ENCODE measurements at regions of chr18 and their contacts with region 1.

Region 1: DNA sequence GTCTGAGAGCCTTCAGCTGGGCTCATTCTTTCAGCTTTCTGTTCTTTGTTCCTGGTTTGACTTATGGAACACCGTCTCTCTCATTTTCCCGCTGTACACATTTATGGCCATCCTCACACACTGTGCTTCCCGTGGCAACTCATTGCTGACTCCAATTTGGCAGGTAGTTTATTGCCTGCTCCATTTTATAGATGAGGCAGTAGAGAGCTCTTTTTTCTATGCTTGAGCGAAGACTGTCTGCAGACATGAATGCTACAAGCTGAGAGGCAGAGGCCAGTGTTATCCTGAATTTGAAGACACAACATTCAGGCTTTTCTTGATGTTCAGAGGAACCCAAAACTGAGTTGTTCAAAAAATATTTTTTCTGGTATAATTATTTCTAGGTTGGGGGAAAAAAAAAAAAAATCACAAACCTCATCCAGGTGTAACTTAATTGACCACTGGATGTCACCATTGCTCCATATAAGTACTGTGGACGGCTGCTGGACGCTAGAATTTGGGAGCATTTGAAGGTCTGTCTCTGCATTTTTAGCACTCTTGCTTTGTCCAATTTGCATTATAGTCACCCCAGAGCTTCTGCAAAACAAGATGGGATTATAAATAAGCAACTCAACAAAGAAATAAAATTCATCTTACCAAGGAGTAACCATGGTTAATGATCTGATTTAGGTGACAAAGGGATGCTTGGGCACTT is 83.5 kb downstream of the HRH4 start:
- DNase-seq: peak; percentile 38
- H3K4me3 ChIP-seq: no peak overlapping the region
- H3K27ac ChIP-seq: no peak overlapping the region
- H3K4me1 ChIP-seq: peaks cover 4% of the 10 kb centered on the region
- H3K27me3 ChIP-seq: no peaks in the 10 kb centered on the region
- CTCF ChIP-seq: peak; percentile 51 to 56

Region 2: GRCh38 chr18:24362758-24363157 is 181.2 kb before region 1 on chr18:
- CTCF ChIA-PET with region 1: interaction called, 15 read pairs
- dilution Hi-C with region 1: no loop called
- in situ Hi-C with region 1: no loop called
- intact Hi-C with region 1: no loop called
- DNase-seq: peak; percentile 45
- H3K4me3 ChIP-seq: no peak overlapping the region
- H3K27ac ChIP-seq: no peak overlapping the region
- H3K4me1 ChIP-seq: peaks cover 6% of the 10 kb centered on the region
- H3K27me3 ChIP-seq: no peaks in the 10 kb centered on the region
- CTCF ChIP-seq: no peak

Region 3: GRCh38 chr18:24479371-24479770 is 64.6 kb before region 1 on chr18:
- CTCF ChIA-PET with region 1: no interaction called
- dilution Hi-C with region 1: no loop called
- in situ Hi-C with region 1: no loop called
- intact Hi-C with region 1: no loop called
- DNase-seq: no peak
- H3K4me3 ChIP-seq: no peak overlapping the region
- H3K27ac ChIP-seq: no peak overlapping the region
- H3K4me1 ChIP-seq: no peaks in the 10 kb centered on the region
- H3K27me3 ChIP-seq: no peaks in the 10 kb centered on the region
- CTCF ChIP-seq: no peak

Region 4: DNA sequence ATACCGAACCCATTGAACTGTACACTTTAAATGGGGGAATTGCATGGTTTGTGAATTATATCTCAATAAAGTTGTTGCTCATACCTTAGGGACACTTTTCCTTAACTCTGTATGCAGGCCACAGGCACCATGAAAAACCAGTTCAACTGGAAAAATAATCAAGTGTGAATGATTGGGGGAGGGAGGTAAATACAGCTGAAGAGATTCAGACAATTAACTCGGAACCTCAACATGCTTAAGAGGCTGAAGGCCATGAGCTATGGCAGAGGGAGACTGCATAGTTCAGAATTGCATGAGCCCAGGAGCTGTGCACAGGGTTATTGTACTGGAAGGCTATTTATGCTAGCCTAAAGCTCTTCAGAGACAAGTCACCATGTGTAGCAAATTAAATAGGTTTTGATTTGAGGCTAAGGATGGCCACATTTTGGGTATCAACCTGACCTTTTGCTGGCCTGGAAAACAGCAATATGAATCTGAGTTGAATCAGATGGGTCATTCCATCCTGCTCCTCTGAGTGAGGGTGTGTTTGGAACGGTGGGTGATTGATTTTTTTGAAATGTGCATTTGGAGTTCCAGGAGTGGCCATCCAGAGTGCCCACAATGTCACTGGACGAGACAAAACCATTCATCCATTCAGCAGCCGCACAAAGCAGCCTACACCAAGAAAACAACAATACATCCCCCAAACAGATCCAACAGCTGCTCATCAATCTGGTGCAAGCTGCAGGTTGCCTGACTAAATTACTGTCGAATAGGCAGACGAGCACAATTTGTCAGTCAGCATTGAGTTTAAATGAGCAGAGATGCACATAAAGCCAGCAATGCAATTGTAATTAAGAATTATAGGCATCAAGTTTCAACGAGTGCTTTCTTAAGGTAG is 41.1 kb before region 1 on chr18:
- CTCF ChIA-PET with region 1: no interaction called
- dilution Hi-C with region 1: no loop called
- in situ Hi-C with region 1: no loop called
- intact Hi-C with region 1: no loop called
- DNase-seq: no peak
- H3K4me3 ChIP-seq: no peak overlapping the region
- H3K27ac ChIP-seq: no peak overlapping the region
- H3K4me1 ChIP-seq: no peaks in the 10 kb centered on the region
- H3K27me3 ChIP-seq: no peaks in the 10 kb centered on the region
- CTCF ChIP-seq: no peak

Region 5: GRCh38 chr18:24600076-24600654 is 56.2 kb after region 1 on chr18:
- CTCF ChIA-PET with region 1: interaction called, 5 read pairs
- dilution Hi-C with region 1: no loop called
- in situ Hi-C with region 1: no loop called
- intact Hi-C with region 1: loop called (anchors 1 kb)
- DNase-seq: peak; percentile 45
- H3K4me3 ChIP-seq: no peak overlapping the region
- H3K27ac ChIP-seq: no peak overlapping the region
- H3K4me1 ChIP-seq: peaks cover 8% of the 10 kb centered on the region
- H3K27me3 ChIP-seq: no peaks in the 10 kb centered on the region
- CTCF ChIP-seq: peak; percentile 55 to 61

Region 6: GRCh38 chr18:24704946-24705630 is 161.1 kb after region 1 on chr18:
- CTCF ChIA-PET with region 1: no interaction called
- dilution Hi-C with region 1: no loop called
- in situ Hi-C with region 1: no loop called
- intact Hi-C with region 1: no loop called
- DNase-seq: no peak
- H3K4me3 ChIP-seq: no peak overlapping the region
- H3K27ac ChIP-seq: no peak overlapping the region
- H3K4me1 ChIP-seq: no peaks in the 10 kb centered on the region
- H3K27me3 ChIP-seq: peaks cover 5% of the 10 kb centered on the region
- CTCF ChIP-seq: no peak

Region 7: DNA sequence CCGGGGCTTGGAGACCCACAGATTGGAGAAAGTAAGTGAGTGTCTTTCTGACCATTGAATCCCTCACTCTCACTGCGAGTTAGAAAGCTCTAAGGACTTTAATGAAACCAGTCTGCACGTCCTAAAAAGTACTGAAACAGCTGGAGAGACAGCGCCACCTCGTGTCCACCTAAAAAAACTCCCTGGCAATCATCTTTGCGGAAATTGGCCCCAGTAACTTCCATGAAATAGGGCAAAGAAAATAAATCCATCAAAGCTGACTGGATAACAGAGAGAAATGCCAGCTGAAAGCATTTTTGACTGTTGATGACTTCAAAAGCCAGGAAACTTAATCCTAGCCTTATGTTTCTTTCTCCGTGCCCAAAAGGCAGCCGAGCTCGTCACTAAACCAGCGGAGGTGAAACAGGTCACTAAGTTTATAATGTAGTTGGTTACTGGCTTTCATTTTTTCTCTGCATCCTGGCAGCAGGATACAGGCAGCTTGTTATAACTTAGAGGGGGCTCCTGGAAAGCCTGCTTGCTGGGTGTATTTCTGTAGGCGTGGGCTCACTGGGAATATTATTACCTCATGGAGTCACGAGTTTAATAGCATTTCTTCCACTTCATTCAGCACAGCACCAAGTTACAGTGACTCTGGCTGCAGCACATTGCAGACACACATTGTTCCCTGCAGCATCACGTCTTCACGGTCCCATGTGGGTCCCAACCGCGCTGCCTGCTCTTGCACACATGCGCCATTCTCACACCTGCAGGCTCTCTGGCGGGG is 183.0 kb after region 1 on chr18:
- CTCF ChIA-PET with region 1: interaction called, 9 read pairs
- dilution Hi-C with region 1: no loop called
- in situ Hi-C with region 1: loop called (anchors 5 to 10 kb)
- intact Hi-C with region 1: loop called (anchors 1 kb)
- DNase-seq: peak; percentile 61
- H3K4me3 ChIP-seq: no peak overlapping the region
- H3K27ac ChIP-seq: no peak overlapping the region
- H3K4me1 ChIP-seq: peaks cover 17% of the 10 kb centered on the region
- H3K27me3 ChIP-seq: peaks cover 2% of the 10 kb centered on the region
- CTCF ChIP-seq: peak; percentile 74 to 85

Region 8: GRCh38 chr18:24846138-24846537 is 302.2 kb after region 1 on chr18:
- CTCF ChIA-PET with region 1: no interaction called
- dilution Hi-C with region 1: no loop called
- in situ Hi-C with region 1: no loop called
- intact Hi-C with region 1: no loop called
- DNase-seq: no peak
- H3K4me3 ChIP-seq: no peak overlapping the region
- H3K27ac ChIP-seq: no peak overlapping the region
- H3K4me1 ChIP-seq: no peaks in the 10 kb centered on the region
- H3K27me3 ChIP-seq: no peaks in the 10 kb centered on the region
- CTCF ChIP-seq: no peak

Region 9: GRCh38 chr18:24878289-24878688 is 334.3 kb after region 1 on chr18:
- CTCF ChIA-PET with region 1: no interaction called
- dilution Hi-C with region 1: no loop called
- in situ Hi-C with region 1: no loop called
- intact Hi-C with region 1: loop called (anchors 10 kb)
- DNase-seq: peak; percentile 8
- H3K4me3 ChIP-seq: no peak overlapping the region
- H3K27ac ChIP-seq: no peak overlapping the region
- H3K4me1 ChIP-seq: no peaks in the 10 kb centered on the region
- H3K27me3 ChIP-seq: no peaks in the 10 kb centered on the region
- CTCF ChIP-seq: peak; percentile 42 to 55

Region 10: GRCh38 chr18:25896178-25896780 is 1352.3 kb after region 1 on chr18:
- CTCF ChIA-PET with region 1: no interaction called
- dilution Hi-C with region 1: no loop called
- in situ Hi-C with region 1: loop called in 1 of 2 experiments (anchors 25 kb)
- intact Hi-C with region 1: loop called (anchors 2 kb)
- DNase-seq: peak; percentile 33
- H3K4me3 ChIP-seq: no peak overlapping the region
- H3K27ac ChIP-seq: no peak overlapping the region
- H3K4me1 ChIP-seq: no peaks in the 10 kb centered on the region
- H3K27me3 ChIP-seq: no peaks in the 10 kb centered on the region
- CTCF ChIP-seq: peak; percentile 67 to 88